Sigmoid colon (tissue), 7 donors: ENCODE measurements at regions of chr18 and their contacts with region 1.

Region 1: DNA sequence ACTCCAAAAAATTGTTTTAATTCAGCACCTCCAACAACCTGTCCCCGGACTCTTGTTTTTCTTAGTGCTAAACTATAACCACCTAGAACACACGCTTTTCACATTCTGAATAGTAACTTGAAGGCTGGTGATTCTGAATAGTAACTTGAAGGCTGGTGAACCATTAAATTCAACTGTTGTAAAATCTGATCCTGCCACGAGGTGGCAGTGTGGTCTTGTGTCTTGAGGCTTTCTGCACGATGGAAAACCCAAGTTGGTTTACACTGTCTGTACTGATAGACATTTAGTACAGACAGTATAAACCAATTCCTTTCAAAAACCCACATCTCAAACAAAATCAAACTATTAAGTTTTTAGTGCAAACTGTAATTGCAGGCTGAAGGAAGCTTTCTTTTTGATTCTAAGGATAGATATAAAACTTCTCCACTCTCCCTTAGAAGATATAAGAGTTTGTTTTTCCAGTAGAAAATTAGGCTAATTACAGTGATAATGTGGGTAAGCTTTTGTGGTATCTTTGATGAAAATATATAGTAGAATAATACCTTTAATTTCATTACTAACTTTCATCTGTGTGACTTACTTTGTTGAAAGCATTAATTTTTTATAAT is 57.6 kb downstream of the VAPA start:
- DNase-seq: peak; percentile 87
- H3K4me3 ChIP-seq: no peak overlapping the region
- H3K27ac ChIP-seq: no peak overlapping the region
- H3K4me1 ChIP-seq: peaks cover 0 to 8% (median 2%) of the 10 kb centered on the region in 4 donors
- H3K27me3 ChIP-seq: no peaks in the 10 kb centered on the region
- CTCF ChIP-seq: peak; percentile 80 to 92 (median 82)
- EP300 ChIP-seq: no peak
- POLR2A ChIP-seq: no peak

Region 2: DNA sequence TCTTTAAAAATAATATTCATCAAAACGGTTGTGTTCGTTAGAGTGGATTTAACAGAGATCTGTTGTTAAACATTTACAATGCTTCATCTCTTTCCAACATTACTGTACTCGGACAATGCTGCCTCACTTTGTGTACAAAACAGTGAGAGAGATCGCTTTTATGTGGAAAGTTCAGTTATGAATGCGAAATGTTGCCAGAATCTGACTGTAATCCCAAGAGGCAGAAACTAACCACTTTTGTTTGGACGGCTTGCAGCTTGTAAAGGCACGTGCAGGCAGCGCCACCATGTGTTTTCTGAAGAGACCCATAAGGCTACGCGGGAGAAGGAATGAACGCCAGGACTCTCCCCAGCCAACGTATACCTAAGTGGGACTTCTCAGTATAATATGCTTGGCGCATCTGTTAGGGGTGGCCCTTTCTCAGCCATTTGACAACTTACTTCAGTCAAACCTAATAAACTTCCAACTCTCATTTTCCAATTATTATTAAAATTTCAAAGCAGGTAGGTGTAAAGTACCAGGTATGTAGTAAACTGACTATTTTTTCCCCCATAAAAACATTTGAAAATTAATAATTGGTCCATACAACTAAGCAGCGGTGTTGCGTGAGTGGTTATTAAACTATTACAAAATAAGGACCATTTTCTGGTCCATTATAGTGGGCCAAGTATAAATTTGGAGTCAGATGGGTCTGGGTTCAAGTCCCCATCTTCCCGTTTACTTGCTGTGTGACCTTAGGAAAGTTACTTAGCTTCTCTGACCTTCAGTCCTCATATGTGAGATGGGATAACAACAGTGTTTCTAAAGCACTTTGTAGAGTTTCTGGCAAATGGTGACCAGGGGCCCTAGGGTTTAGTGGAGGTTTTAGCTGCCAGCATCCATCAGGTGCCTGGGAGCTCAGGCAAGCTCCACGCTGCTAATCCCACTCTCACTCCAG is 548.9 kb after region 1 on chr18:
- intact Hi-C with region 1: loop called (anchors 1 kb)
- DNase-seq: peak; percentile 95
- H3K4me3 ChIP-seq: peak overlapping the region in 1 of 4 donors; percentile 1
- H3K27ac ChIP-seq: peak overlapping the region; percentile 49 to 60 (median 54)
- H3K4me1 ChIP-seq: peaks cover 0 to 40% (median 21%) of the 10 kb centered on the region in 4 donors
- H3K27me3 ChIP-seq: no peaks in the 10 kb centered on the region
- CTCF ChIP-seq: peak; percentile 71 to 89 (median 73)
- EP300 ChIP-seq: no peak
- POLR2A ChIP-seq: no peak

Region 3: DNA sequence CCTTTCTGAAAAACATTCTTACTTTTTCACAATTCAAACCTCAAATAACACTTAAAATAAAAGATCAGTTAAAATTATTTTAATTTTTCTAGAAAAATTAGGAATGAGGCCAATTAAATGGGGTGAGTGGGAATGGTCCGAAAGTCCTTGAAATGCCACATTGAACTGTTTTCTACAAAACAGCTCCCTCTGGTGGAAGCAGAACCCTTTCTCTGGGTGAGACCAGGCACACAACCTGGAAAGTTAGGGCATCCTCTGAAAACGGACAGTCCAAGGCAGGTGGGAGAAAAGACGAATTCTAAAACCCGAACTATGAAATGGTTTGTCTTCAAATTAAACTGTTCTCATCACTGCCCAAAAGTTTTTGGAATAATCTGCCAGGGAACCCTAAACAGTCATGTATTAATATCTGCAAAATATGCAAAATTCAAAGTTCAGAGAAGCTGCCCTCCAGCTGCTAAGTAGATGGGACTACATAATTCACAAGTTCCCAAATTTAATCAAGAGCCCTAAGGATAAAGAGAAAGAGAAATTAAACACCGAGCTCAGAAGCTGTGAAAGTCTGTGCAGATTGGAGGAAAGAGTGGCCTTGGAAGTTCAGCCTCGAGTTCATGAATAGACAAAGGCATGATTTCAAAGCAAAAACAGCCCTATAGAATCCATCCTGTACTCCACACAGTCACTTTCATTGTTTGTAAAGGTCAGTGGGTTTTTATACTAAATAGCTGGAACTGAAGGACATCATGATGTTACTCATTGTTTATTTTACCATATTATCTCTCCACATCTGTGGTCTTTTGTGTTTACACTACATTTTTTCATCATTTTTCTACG is 1069.6 kb after region 1 on chr18:
- intact Hi-C with region 1: loop called (anchors 5 kb)
- DNase-seq: no peak
- H3K4me3 ChIP-seq: no peak overlapping the region
- H3K27ac ChIP-seq: no peak overlapping the region
- H3K4me1 ChIP-seq: no peaks in the 10 kb centered on the region
- H3K27me3 ChIP-seq: no peaks in the 10 kb centered on the region
- CTCF ChIP-seq: peak; percentile 34 to 77 (median 69)
- EP300 ChIP-seq: no peak
- POLR2A ChIP-seq: no peak